A673 (cell line): ENCODE measurements at regions of chr1 and their contacts with region 1.

Region 1: DNA sequence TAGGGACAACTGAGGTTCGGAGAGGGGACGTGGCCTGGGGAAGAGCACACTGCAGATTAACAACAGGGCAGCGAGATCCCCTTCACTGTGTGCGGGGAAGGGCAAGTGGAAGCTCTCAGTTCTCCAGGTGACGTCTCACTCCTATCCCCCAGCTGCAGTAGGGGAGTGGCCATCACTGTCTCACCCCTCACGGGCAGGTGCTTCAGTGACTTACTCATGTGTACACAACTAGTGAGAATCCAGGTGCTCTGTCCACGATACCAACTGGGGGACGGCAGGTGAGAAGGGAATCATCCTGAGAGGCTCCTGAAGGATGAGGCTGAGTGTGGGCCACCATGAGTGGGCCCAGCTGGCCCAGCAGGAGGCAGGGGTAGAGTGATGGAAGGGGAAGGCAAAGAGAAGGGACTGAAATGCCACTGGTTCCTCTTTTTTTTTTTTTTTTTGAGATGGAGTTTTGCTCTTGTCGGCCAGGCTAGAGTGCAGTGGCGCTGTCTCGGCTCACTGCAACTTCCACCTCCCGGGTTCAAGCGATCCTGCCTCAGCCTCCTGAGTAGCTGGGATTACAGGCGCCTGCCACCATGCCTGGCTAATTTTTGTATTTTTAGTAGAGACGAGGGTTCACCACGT is 25.9 kb downstream of the RHBG start:
- DNase-seq: no peak
- H3K4me3 ChIP-seq: no peak overlapping the region
- H3K27ac ChIP-seq: no peak overlapping the region
- H3K4me1 ChIP-seq: no peaks in the 10 kb centered on the region
- H3K27me3 ChIP-seq: no peaks in the 10 kb centered on the region
- CTCF ChIP-seq: no peak

Region 2: GRCh38 chr1:155050560-155051341 is 1344.2 kb before region 1 on chr1 and contains the start of gene ADAM15:
- CTCF ChIA-PET with region 1: no interaction called
- POLR2A ChIA-PET with region 1: no interaction called
- intact Hi-C with region 1: no loop called
- DNase-seq: peak; percentile 80
- H3K4me3 ChIP-seq: peak within 1 kb of the TSS; percentile 89
- H3K27ac ChIP-seq: peak within 1 kb of the TSS; percentile 47
- H3K4me1 ChIP-seq: peaks cover 20% of the 10 kb centered on the region
- H3K27me3 ChIP-seq: no peaks in the 10 kb centered on the region
- CTCF ChIP-seq: peak; percentile 98
- total RNA-seq, gene ADAM15: 36.3 and 48.5 TPM in 2 replicates

Region 3: GRCh38 chr1:156618853-156619581 is 224.1 kb after region 1 on chr1 and contains the start of gene HAPLN2:
- CTCF ChIA-PET with region 1: interaction called, 15 read pairs
- POLR2A ChIA-PET with region 1: no interaction called
- intact Hi-C with region 1: no loop called
- DNase-seq: peak; percentile 42
- H3K4me3 ChIP-seq: no peak within 1 kb of the TSS
- H3K27ac ChIP-seq: no peak within 1 kb of the TSS
- H3K4me1 ChIP-seq: peaks cover 5% of the 10 kb centered on the region
- H3K27me3 ChIP-seq: peaks cover 44% of the 10 kb centered on the region
- CTCF ChIP-seq: peak; percentile 58
- total RNA-seq, gene HAPLN2: not detected in 2 replicates